Ascending aorta (tissue), 2 donors: ENCODE measurements at regions of chr3 and their contacts with region 1.

Region 1: GRCh38 chr3:58217209-58217811 is 6.5 kb upstream of the DNASE1L3 start:
- DNase-seq: peak; percentile 58 to 86
- H3K4me3 ChIP-seq: no peak overlapping the region
- H3K27ac ChIP-seq: no peak overlapping the region
- H3K4me1 ChIP-seq: no peaks in the 10 kb centered on the region
- H3K27me3 ChIP-seq: no peaks in the 10 kb centered on the region
- CTCF ChIP-seq: peak; percentile 49 to 78 (median 62)

Region 2: GRCh38 chr3:58177747-58178527 is 39.4 kb before region 1 on chr3:
- intact Hi-C with region 1: loop called (anchors 2 kb)
- DNase-seq: peak; percentile 51 to 94
- H3K4me3 ChIP-seq: peak overlapping the region; percentile 57 to 62
- H3K27ac ChIP-seq: no peak overlapping the region
- H3K4me1 ChIP-seq: peaks cover 3 to 17% of the 10 kb centered on the region in 2 donors
- H3K27me3 ChIP-seq: no peaks in the 10 kb centered on the region
- CTCF ChIP-seq: peak; percentile 93 to 95 (median 93)

Region 3: DNA sequence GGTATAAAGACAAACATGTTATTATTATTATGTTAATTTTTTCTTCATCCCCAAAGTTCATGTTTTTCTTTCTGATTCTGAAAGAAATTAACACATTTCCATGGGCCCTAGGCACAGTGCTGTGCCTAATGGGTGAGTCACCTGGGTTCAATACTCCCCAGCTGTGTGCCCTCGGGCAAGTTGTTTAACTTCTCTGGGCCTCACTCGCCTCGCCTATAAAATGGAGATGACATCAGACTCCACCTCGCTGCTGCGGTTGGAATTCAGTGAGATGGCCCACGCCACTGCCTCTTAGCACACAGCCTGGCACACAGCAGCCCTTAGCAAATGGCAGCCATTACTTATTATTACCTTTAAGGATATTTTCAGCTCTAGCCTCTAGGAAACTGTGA is 29.1 kb before region 1 on chr3:
- intact Hi-C with region 1: loop called (anchors 2 kb)
- DNase-seq: no peak
- H3K4me3 ChIP-seq: no peak overlapping the region
- H3K27ac ChIP-seq: no peak overlapping the region
- H3K4me1 ChIP-seq: no peaks in the 10 kb centered on the region
- H3K27me3 ChIP-seq: no peaks in the 10 kb centered on the region
- CTCF ChIP-seq: no peak

Region 4: GRCh38 chr3:58237238-58237940 is 20.1 kb after region 1 on chr3 and contains the start of gene ABHD6:
- intact Hi-C with region 1: loop called (anchors 1 kb)
- DNase-seq: peak; percentile 14 to 85
- H3K4me3 ChIP-seq: peak within 1 kb of the TSS; percentile 80 to 81
- H3K27ac ChIP-seq: peak within 1 kb of the TSS; percentile 60 to 69
- H3K4me1 ChIP-seq: peaks cover 0 to 2% of the 10 kb centered on the region in 2 donors
- H3K27me3 ChIP-seq: no peaks in the 10 kb centered on the region
- CTCF ChIP-seq: peak in 1 of 3 experiments; percentile 10
- total RNA-seq, gene ABHD6: 6.9 TPM